ENCODE measurements at regions of chr1 and their contacts with region 1.

Region 1: GRCh38 chr1:239467730-239468129 is 81.4 kb downstream of the CHRM3 start:
- DNase-seq: no peak

Region 2: DNA sequence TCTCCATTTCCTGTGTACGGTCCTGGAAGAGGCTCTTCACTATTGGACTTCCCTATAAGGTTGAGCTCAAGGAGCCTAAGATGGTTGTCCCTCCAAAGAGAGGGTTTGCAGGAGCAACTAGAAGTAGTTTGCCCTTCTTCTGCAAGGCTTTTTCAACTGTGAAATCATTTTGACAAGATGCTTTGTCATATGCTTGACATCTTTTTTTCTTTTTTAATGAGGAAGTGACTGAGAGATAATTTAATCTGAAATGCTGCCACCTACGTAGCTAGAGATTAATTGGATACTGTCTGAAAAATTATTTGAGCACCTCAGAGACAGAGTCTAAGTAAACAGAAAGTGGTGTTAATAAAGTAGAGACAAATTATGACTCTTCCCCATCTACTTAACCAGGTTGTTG is 15.7 kb after region 1 on chr1:
- intact Hi-C with region 1: loop called in 1 of 2 experiments (anchors 1 kb)
- DNase-seq: no peak